T-cell (primary cell): ENCODE measurements at regions of chr11 and their contacts with region 1.

Region 1: GRCh38 chr11:62665075-62665598 is at the starts of genes C11orf98 and CSKMT:
- DNase-seq: peak; percentile 86 to 97 (median 93)
- ATAC-seq: peak; percentile 90 to 94 (median 92)
- H3K4me3 ChIP-seq: peak within 1 kb of the TSS; percentile 97 to 99
- H3K4me3 Mint-ChIP-seq: peak within 1 kb of the TSS; percentile 93 to 95 (median 95)
- H3K27ac ChIP-seq: peak within 1 kb of the TSS; percentile 73
- H3K27ac Mint-ChIP-seq: peak within 1 kb of the TSS; percentile 93 to 94
- H3K4me1 ChIP-seq: peaks cover 18 to 43% of the 10 kb centered on the region in 2 experiments
- H3K4me1 Mint-ChIP-seq: peaks cover 33 to 44% (median 40%) of the 10 kb centered on the region in 3 donors
- H3K27me3 ChIP-seq: peaks cover 0 to 3% of the 10 kb centered on the region in 2 experiments
- H3K27me3 Mint-ChIP-seq: no peaks in the 10 kb centered on the region
- total RNA-seq, gene C11orf98: 28.3 to 62.6 (median 54.8) TPM
- total RNA-seq, gene CSKMT: 14.8 to 35.6 (median 27.4) TPM

Region 2: GRCh38 chr11:62370743-62371440 is 294.2 kb before region 1 on chr11:
- CTCF ChIA-PET with region 1: no interaction called
- POLR2A ChIA-PET with region 1: no interaction called
- DNase-seq: peak in 31 of 35 experiments; percentile 8 to 66 (median 34)
- ATAC-seq: peak; percentile 92 to 97 (median 96)
- H3K4me3 ChIP-seq: no peak overlapping the region
- H3K4me3 Mint-ChIP-seq: peak overlapping the region; percentile 52 to 65 (median 61)
- H3K27ac ChIP-seq: peak overlapping the region; percentile 52
- H3K27ac Mint-ChIP-seq: peak overlapping the region; percentile 84 to 87
- H3K4me1 ChIP-seq: peaks cover 0 to 12% of the 10 kb centered on the region in 2 experiments
- H3K4me1 Mint-ChIP-seq: peaks cover 0 to 10% (median 4%) of the 10 kb centered on the region in 3 donors
- H3K27me3 ChIP-seq: no peaks in the 10 kb centered on the region
- H3K27me3 Mint-ChIP-seq: no peaks in the 10 kb centered on the region

Region 3: DNA sequence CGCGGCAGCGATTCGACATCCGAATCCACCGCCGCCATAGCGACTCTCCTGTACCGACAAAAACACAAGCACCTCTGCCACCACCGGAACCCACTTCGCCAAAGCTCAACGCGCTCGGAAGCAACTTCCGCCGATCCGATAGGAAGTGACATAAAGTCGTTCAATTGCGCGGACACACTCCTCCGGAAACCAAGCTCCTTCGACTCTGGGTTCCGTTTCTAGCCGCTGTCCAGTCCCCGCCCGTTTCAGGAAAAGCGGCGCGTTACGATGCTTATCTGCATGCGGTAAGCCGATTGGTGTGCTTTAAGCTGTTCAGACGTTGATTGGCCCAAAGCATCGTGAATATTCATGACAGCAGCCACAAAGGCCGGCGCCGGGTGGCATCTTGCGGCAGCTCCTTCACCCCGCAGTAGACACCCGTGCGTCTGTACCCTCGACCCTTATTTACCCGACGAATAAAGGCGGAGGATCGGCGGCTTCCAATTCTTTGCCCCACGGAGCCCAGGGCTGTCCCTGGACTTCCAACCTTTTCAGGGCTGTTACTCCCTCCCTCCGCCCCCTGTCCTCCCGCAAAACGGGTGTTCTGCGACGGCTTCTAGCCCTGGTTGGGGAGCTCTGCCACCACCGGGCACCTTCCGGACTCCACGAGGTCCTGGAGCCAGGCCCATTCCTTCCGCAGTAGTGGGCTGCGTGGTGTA is 73.5 kb before region 1 on chr11 and contains the start of gene TUT1:
- CTCF ChIA-PET with region 1: interaction called, 7 to 26 read pairs
- POLR2A ChIA-PET with region 1: interaction called, 7 to 21 read pairs
- DNase-seq: peak; percentile 91 to 99 (median 96)
- ATAC-seq: peak; percentile 85 to 91 (median 88)
- H3K4me3 ChIP-seq: peak within 1 kb of the TSS; percentile 90 to 93
- H3K4me3 Mint-ChIP-seq: peak within 1 kb of the TSS; percentile 96 to 99 (median 97)
- H3K27ac ChIP-seq: peak within 1 kb of the TSS; percentile 92
- H3K27ac Mint-ChIP-seq: peak within 1 kb of the TSS; percentile 98 to 99
- H3K4me1 ChIP-seq: peaks cover 15 to 48% of the 10 kb centered on the region in 2 experiments
- H3K4me1 Mint-ChIP-seq: peaks cover 44 to 57% (median 55%) of the 10 kb centered on the region in 3 donors
- H3K27me3 ChIP-seq: no peaks in the 10 kb centered on the region
- H3K27me3 Mint-ChIP-seq: no peaks in the 10 kb centered on the region
- total RNA-seq, gene TUT1: 35.2 to 56.0 (median 42.9) TPM

Region 4: GRCh38 chr11:62621567-62622470 is 43.3 kb before region 1 on chr11 and contains the start of gene B3GAT3:
- CTCF ChIA-PET with region 1: interaction called in 1 of 2 experiments, 11 read pairs
- POLR2A ChIA-PET with region 1: interaction called, 3 to 8 read pairs
- DNase-seq: peak; percentile 89 to 99 (median 95)
- ATAC-seq: peak; percentile 79 to 84 (median 82)
- H3K4me3 ChIP-seq: peak within 1 kb of the TSS; percentile 83 to 95
- H3K4me3 Mint-ChIP-seq: peak within 1 kb of the TSS; percentile 90 to 99 (median 94)
- H3K27ac ChIP-seq: peak within 1 kb of the TSS; percentile 85
- H3K27ac Mint-ChIP-seq: peak within 1 kb of the TSS; percentile 96 to 97
- H3K4me1 ChIP-seq: peaks cover 15 to 27% of the 10 kb centered on the region in 2 experiments
- H3K4me1 Mint-ChIP-seq: peaks cover 17 to 27% (median 24%) of the 10 kb centered on the region in 3 donors
- H3K27me3 ChIP-seq: no peaks in the 10 kb centered on the region
- H3K27me3 Mint-ChIP-seq: no peaks in the 10 kb centered on the region
- total RNA-seq, gene B3GAT3: 59.0 to 94.5 (median 90.5) TPM

Region 5: DNA sequence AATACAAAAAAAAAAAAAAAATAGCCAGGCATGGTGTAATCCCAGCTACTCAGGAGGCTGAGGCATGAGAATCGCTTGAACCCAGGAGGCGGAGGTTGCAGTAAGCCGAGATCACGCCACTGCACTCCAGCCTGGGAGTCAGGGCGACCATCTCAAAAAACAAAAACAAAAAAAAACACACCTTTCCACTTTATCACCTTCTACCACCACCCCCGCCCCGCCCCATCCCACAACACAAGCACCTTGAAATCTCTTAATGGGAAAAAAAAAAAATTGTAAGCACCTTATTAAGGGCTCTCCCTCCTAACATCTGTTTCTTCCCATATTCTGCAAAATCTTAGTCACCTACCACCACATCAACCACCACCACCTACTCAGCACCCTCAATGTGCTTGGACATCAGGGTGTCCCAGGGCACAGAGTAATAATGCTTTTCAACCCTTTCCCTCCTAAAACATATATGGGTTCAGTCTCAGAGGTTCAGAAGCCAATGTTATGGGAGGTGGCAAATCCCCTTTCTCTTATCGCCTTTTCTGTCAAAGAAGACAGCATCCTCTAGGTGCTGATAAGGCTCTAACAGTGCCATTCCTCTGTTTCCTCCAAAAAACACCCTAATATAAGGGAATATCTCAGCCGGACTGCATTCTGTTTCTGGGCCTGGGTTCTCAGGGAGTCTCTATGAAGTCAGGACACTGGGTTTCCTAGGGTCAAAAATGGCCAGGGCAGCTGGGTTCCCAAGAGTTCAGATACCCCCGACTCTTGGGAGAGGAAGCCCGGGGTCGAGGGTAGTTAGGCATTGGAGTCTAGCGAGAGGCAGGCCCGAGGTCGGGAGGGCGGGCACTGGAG is 12.8 kb before region 1 on chr11:
- CTCF ChIA-PET with region 1: interaction called in 1 of 2 experiments, 5 read pairs
- POLR2A ChIA-PET with region 1: interaction called, 8 to 34 read pairs
- DNase-seq: peak in 9 of 35 experiments; percentile 16 to 72 (median 40)
- ATAC-seq: peak; percentile 5 to 11 (median 8)
- H3K4me3 ChIP-seq: peak overlapping the region; percentile 69 to 95
- H3K4me3 Mint-ChIP-seq: peak overlapping the region; percentile 87 to 97 (median 88)
- H3K27ac ChIP-seq: peak overlapping the region; percentile 63
- H3K27ac Mint-ChIP-seq: peak overlapping the region; percentile 85 to 90
- H3K4me1 ChIP-seq: peaks cover 7 to 42% of the 10 kb centered on the region in 2 experiments
- H3K4me1 Mint-ChIP-seq: peaks cover 19 to 28% (median 19%) of the 10 kb centered on the region in 3 donors
- H3K27me3 ChIP-seq: no peaks in the 10 kb centered on the region
- H3K27me3 Mint-ChIP-seq: no peaks in the 10 kb centered on the region

Region 6: DNA sequence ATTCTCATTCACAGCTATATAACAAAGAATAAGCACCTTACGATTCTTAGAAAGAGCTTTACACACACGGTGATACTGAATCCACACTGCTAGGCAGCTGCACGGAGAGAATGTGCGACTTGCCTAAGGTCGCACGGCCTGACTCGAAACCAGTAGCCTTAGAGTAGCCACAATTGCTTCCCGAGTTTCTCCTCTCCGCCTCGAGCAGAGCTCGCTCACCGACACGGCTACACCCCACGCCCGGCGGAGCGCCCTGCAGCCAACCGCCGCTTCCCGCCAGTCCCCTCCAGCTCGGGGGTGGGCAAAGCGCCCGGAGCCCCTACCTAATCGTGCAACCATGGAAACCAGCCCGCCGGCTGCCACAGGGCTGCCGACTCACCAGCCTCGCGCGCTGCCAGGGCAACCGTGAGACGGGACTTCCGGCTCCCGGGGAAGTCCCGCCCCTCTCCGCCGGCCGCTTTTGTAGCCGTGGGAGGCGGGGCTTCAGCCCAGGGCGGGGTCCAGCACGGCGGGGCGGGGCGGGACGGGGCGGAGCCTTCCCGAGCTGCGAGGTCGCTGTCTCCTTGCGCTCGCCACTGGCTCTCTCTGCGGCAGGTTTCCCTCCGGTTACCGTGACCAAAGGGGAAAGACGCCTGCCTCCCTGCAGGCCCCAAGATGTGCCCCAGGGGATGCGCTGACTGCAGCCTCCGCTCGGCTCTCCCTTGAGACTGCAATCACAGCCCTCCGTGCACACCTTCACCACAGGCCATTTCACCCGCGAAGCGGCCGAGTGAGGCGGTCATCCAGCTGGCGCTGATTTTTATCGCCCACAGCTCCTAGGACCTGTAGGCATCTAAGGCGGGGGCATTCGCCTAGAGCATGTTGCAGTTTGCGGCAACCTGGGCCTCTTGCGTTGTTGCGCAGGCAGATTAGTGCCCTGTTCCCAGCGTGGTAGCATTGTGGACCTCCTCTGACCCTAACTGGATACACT is 41.0 kb after region 1 on chr11:
- CTCF ChIA-PET with region 1: interaction called, 4 to 5 read pairs
- POLR2A ChIA-PET with region 1: interaction called, 8 to 16 read pairs
- DNase-seq: peak; percentile 82 to 96 (median 91)
- ATAC-seq: peak; percentile 69 to 75 (median 73)
- H3K4me3 ChIP-seq: peak overlapping the region; percentile 59 to 62
- H3K4me3 Mint-ChIP-seq: peak overlapping the region; percentile 85 to 97 (median 87)
- H3K27ac ChIP-seq: peak overlapping the region; percentile 83
- H3K27ac Mint-ChIP-seq: peak overlapping the region; percentile 82 to 84
- H3K4me1 ChIP-seq: peaks cover 19 to 48% of the 10 kb centered on the region in 2 experiments
- H3K4me1 Mint-ChIP-seq: peaks cover 43 to 51% (median 47%) of the 10 kb centered on the region in 3 donors
- H3K27me3 ChIP-seq: no peaks in the 10 kb centered on the region
- H3K27me3 Mint-ChIP-seq: no peaks in the 10 kb centered on the region

Region 7: GRCh38 chr11:62753736-62754603 is 88.8 kb after region 1 on chr11 and contains the start of gene ZBTB3:
- CTCF ChIA-PET with region 1: interaction called in 1 of 2 experiments, 5 read pairs
- POLR2A ChIA-PET with region 1: interaction called in 1 of 2 experiments, 12 read pairs
- DNase-seq: peak; percentile 92 to 99 (median 96)
- ATAC-seq: peak; percentile 94 to 95 (median 95)
- H3K4me3 ChIP-seq: peak within 1 kb of the TSS; percentile 81 to 88
- H3K4me3 Mint-ChIP-seq: peak within 1 kb of the TSS; percentile 83 to 97 (median 91)
- H3K27ac ChIP-seq: peak within 1 kb of the TSS; percentile 76
- H3K27ac Mint-ChIP-seq: peak within 1 kb of the TSS; percentile 96 to 99
- H3K4me1 ChIP-seq: peaks cover 4 to 37% of the 10 kb centered on the region in 2 experiments
- H3K4me1 Mint-ChIP-seq: peaks cover 15 to 30% (median 28%) of the 10 kb centered on the region in 3 donors
- H3K27me3 ChIP-seq: no peaks in the 10 kb centered on the region
- H3K27me3 Mint-ChIP-seq: no peaks in the 10 kb centered on the region
- total RNA-seq, gene ZBTB3: 5.9 to 24.6 (median 22.9) TPM